Heart left ventricle (tissue), 16 donors: ENCODE measurements at regions of chr1 and their contacts with region 1.

Region 1: GRCh38 chr1:113307771-113308445 is 82.4 kb upstream of the MAGI3 start:
- DNase-seq: no peak
- ATAC-seq: no peak
- H3K4me3 ChIP-seq: no peak overlapping the region
- H3K27ac ChIP-seq: no peak overlapping the region
- H3K4me1 ChIP-seq: no peaks in the 10 kb centered on the region
- H3K27me3 ChIP-seq: no peaks in the 10 kb centered on the region
- CTCF ChIP-seq: no peak
- POLR2A ChIP-seq: no peak

Region 2: GRCh38 chr1:113353581-113353980 is 45.7 kb after region 1 on chr1:
- intact Hi-C with region 1: loop called in 1 of 10 experiments (anchors 10 kb)
- DNase-seq: no peak
- ATAC-seq: peak in 1 of 4 donors; percentile 24
- H3K4me3 ChIP-seq: no peak overlapping the region
- H3K27ac ChIP-seq: no peak overlapping the region
- H3K4me1 ChIP-seq: no peaks in the 10 kb centered on the region
- H3K27me3 ChIP-seq: no peaks in the 10 kb centered on the region
- CTCF ChIP-seq: no peak
- POLR2A ChIP-seq: no peak